Caco-2 (cell line): ENCODE measurements at regions of chr5 and their contacts with region 1.

Region 1: GRCh38 chr5:78920604-78921003 is 64.5 kb downstream of the ARSB start:
- DNase-seq: peak; percentile 30 to 40
- H3K4me3 ChIP-seq: no peak overlapping the region
- H3K4me3 Mint-ChIP-seq: no peak overlapping the region
- H3K27ac Mint-ChIP-seq: no peak overlapping the region
- H3K4me1 ChIP-seq: peaks cover 6% of the 10 kb centered on the region
- H3K4me1 Mint-ChIP-seq: peaks cover 5% of the 10 kb centered on the region
- H3K27me3 ChIP-seq: no peaks in the 10 kb centered on the region
- H3K27me3 Mint-ChIP-seq: no peaks in the 10 kb centered on the region
- CTCF ChIP-seq: peak; percentile 18 to 55

Region 2: DNA sequence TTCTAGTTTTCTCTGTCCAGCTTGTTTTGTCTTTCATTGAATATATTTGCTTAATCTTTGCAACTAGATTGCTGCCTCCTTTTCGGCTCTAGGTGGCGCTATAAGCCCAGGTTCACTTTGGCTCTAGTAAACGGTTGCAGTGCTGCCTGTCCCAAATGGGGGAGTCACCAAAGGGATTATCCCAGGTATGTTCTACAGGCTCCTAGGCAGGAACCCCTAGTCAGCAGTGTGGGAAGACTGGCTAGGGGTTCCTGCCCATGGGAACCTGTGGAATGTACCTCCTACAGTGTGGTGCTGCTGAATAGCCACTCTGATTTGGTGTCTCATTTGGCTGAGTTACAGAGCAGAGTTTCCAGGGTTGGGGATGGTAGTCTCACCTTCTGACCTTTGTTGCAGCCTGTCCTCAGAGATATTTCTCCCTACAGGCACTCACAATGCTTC is 20.7 kb before region 1 on chr5:
- CTCF ChIA-PET with region 1: interaction called, 11 read pairs
- POLR2A ChIA-PET with region 1: no interaction called
- intact Hi-C with region 1: no loop called
- DNase-seq: peak; percentile 71
- H3K4me3 ChIP-seq: no peak overlapping the region
- H3K4me3 Mint-ChIP-seq: no peak overlapping the region
- H3K27ac Mint-ChIP-seq: no peak overlapping the region
- H3K4me1 ChIP-seq: 0 out of 2 replicates have a peak, but pooled peaks cover 4% of the 10 kb centered on the region
- H3K4me1 Mint-ChIP-seq: no peaks in the 10 kb centered on the region
- H3K27me3 ChIP-seq: no peaks in the 10 kb centered on the region
- H3K27me3 Mint-ChIP-seq: no peaks in the 10 kb centered on the region
- CTCF ChIP-seq: peak; percentile 69 to 86

Region 3: GRCh38 chr5:78985116-78985724 is 64.6 kb after region 1 on chr5 and contains the start of gene ARSB:
- CTCF ChIA-PET with region 1: no interaction called
- POLR2A ChIA-PET with region 1: no interaction called
- intact Hi-C with region 1: no loop called
- DNase-seq: no peak
- H3K4me3 ChIP-seq: peak within 1 kb of the TSS; percentile 86
- H3K4me3 Mint-ChIP-seq: peak within 1 kb of the TSS; percentile 83
- H3K27ac Mint-ChIP-seq: peak within 1 kb of the TSS; percentile 84
- H3K4me1 ChIP-seq: peaks cover 20% of the 10 kb centered on the region
- H3K4me1 Mint-ChIP-seq: peaks cover 11% of the 10 kb centered on the region
- H3K27me3 ChIP-seq: no peaks in the 10 kb centered on the region
- H3K27me3 Mint-ChIP-seq: no peaks in the 10 kb centered on the region
- CTCF ChIP-seq: no peak
- total RNA-seq, gene ARSB: 17.4 and 17.9 TPM in 2 replicates